ENCODE measurements at regions of chr4 and their contacts with region 1.

Region 1: GRCh38 chr4:121096629-121097028 is 24.3 kb upstream of the NDNF start:
- DNase-seq: no peak
- H3K4me3 ChIP-seq: no peak overlapping the region
- H3K27ac ChIP-seq: no peak overlapping the region
- H3K4me1 ChIP-seq: no peaks in the 10 kb centered on the region
- H3K27me3 ChIP-seq: no peaks in the 10 kb centered on the region
- CTCF ChIP-seq: peak; percentile 58 to 64 (median 59)
- EP300 ChIP-seq: no peak
- POLR2A ChIP-seq: no peak

Region 2: GRCh38 chr4:120156120-120156718 is 940.4 kb before region 1 on chr4:
- in situ Hi-C with region 1: loop called (anchors 10 to 25 kb)
- intact Hi-C with region 1: loop called (anchors 5 kb)
- DNase-seq: no peak
- H3K4me3 ChIP-seq: no peak overlapping the region
- H3K27ac ChIP-seq: no peak overlapping the region
- H3K4me1 ChIP-seq: peaks cover 0 to 6% (median 0%) of the 10 kb centered on the region in 4 donors
- H3K27me3 ChIP-seq: no peaks in the 10 kb centered on the region
- CTCF ChIP-seq: peak; percentile 60 to 71 (median 63)
- EP300 ChIP-seq: no peak
- POLR2A ChIP-seq: no peak

Region 3: GRCh38 chr4:120163895-120164294 is 932.7 kb before region 1 on chr4:
- in situ Hi-C with region 1: loop called (anchors 10 to 25 kb)
- intact Hi-C with region 1: loop called (anchors 5 kb)
- DNase-seq: no peak
- H3K4me3 ChIP-seq: no peak overlapping the region
- H3K27ac ChIP-seq: no peak overlapping the region
- H3K4me1 ChIP-seq: no peaks in the 10 kb centered on the region
- H3K27me3 ChIP-seq: no peaks in the 10 kb centered on the region
- CTCF ChIP-seq: no peak
- EP300 ChIP-seq: no peak
- POLR2A ChIP-seq: no peak

Region 4: DNA sequence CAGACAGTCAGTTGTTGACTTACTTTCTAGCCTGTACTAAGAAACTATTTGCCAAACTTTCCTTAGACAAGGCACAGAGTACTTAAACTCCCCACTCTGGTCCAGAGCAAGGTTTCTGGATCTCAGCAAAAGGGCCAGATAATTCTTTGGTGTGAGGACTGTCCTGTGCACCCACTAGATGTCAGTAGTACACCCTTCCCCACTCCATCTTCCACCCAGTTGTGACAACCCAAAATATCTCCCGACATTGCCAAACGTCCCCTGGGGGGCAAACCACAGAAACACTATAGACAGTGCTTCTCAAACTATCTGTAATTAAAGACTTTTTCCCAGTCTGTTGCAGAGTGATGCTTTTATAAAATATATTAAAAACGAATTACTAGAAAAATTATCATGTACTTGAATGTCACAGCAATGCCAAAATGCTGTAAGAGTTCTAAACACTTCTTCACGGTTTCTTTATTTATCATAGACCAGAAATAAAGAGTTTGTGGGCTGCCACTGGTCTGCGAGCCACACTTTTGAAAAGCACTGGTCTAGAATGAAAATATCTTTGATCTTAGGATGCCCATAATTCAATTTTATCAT is 377.6 kb before region 1 on chr4:
- in situ Hi-C with region 1: loop called in 2 of 4 experiments (anchors 25 kb)
- intact Hi-C with region 1: no loop called
- DNase-seq: peak; percentile 35
- H3K4me3 ChIP-seq: no peak overlapping the region
- H3K27ac ChIP-seq: no peak overlapping the region
- H3K4me1 ChIP-seq: peaks cover 0 to 3% (median 0%) of the 10 kb centered on the region in 4 donors
- H3K27me3 ChIP-seq: no peaks in the 10 kb centered on the region
- CTCF ChIP-seq: peak; percentile 45 to 55 (median 48)
- EP300 ChIP-seq: no peak
- POLR2A ChIP-seq: no peak

Region 5: DNA sequence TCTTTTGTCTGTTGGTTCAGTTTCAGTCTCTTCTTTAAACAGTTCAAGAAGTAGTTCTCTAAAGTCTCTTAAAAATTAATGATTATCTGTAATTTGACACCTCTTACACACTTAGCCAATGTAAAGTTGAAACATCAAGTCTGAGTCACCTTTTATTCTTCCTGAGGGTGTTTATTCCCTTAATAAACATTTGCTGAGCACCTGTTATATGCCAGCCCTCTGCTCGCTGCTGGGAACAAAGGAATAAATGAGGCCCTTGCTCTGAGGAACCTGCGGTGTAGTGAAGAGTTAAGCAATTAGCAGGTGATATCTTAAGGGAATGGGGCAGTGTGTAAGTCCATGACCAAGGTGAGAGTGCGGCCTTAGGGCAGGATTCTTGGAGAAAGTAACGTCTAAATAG is 19.1 kb before region 1 on chr4:
- in situ Hi-C with region 1: no loop called
- intact Hi-C with region 1: no loop called
- DNase-seq: no peak
- H3K4me3 ChIP-seq: no peak overlapping the region
- H3K27ac ChIP-seq: no peak overlapping the region
- H3K4me1 ChIP-seq: peaks cover 0 to 22% (median 8%) of the 10 kb centered on the region in 4 donors
- H3K27me3 ChIP-seq: peaks cover 4% of the 10 kb centered on the region
- CTCF ChIP-seq: no peak
- EP300 ChIP-seq: no peak
- POLR2A ChIP-seq: no peak

Measured in transverse colon (tissue), 4 donors.